BJ (cell line): ENCODE measurements at regions of chr1 and their contacts with region 1.

Region 1: GRCh38 chr1:76154206-76154956 is 79.8 kb downstream of the ST6GALNAC3 start:
- DNase-seq: peak; percentile 7
- H3K4me3 ChIP-seq: peak overlapping the region; percentile 36
- H3K27me3 ChIP-seq: peaks cover 2% of the 10 kb centered on the region; the same call in 1 of the 2 replicates
- CTCF ChIP-seq: peak; percentile 98

Region 2: GRCh38 chr1:75908717-75909152 is 245.6 kb before region 1 on chr1:
- CTCF ChIA-PET with region 1: interaction called, 11 read pairs
- POLR2A ChIA-PET with region 1: no interaction called
- DNase-seq: no peak
- H3K4me3 ChIP-seq: no peak overlapping the region
- H3K27me3 ChIP-seq: no peaks in the 10 kb centered on the region
- CTCF ChIP-seq: peak; percentile 60

Region 3: DNA sequence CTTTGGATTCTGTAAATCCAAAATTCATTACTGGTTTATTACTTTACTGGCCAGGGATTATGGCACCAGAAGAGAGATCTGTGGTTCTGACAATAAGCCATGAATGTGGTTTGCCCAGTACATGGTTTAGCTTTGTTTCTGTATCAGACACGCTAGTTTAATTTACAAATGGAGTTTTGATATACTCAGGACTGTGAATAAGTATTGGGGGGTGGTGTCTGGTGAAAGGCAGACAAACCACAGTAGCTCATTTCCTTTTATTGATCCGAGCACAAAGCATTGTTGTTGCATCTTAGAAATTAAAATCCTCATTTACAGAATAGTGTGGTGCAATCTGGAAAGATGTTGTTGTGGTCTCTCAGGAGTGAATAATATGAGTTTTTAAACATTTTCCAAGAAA is 16.1 kb after region 1 on chr1:
- CTCF ChIA-PET with region 1: interaction called, 14 read pairs
- POLR2A ChIA-PET with region 1: no interaction called
- DNase-seq: no peak
- H3K4me3 ChIP-seq: no peak overlapping the region
- H3K27me3 ChIP-seq: no peaks in the 10 kb centered on the region
- CTCF ChIP-seq: no peak

Region 4: GRCh38 chr1:76203132-76203531 is 48.8 kb after region 1 on chr1:
- CTCF ChIA-PET with region 1: no interaction called
- POLR2A ChIA-PET with region 1: no interaction called
- DNase-seq: no peak
- H3K4me3 ChIP-seq: no peak overlapping the region
- H3K27me3 ChIP-seq: no peaks in the 10 kb centered on the region
- CTCF ChIP-seq: no peak

Region 5: GRCh38 chr1:76354236-76354635 is 199.9 kb after region 1 on chr1:
- CTCF ChIA-PET with region 1: no interaction called
- POLR2A ChIA-PET with region 1: no interaction called
- DNase-seq: no peak
- H3K4me3 ChIP-seq: no peak overlapping the region
- H3K27me3 ChIP-seq: no peaks in the 10 kb centered on the region
- CTCF ChIP-seq: no peak

Region 6: DNA sequence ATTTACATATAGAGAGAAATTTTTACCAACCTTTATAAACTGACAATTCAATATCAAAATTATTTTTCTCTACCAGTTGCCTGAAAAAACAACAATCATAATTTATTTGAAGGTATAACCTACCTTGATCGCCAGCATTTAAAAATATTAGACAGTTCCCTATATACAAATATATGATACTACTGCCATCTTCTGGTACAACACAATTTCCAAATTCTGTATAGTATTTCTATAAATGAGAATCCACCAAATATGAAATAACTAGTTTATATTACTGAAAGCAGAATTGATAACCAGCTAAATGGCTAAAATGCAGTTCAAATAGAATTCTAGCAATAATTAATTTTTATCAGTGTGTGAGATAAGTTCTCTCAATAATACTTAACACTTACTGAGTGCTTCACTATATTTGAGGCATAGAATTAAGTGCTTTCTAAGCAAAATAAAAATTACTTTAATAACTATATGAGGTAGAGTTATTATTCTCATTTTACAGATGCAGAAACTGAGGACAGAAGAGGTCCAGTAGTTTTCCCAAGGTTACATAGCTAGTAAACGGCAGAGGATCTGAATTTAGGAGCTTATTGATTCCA is 989.2 kb after region 1 on chr1:
- CTCF ChIA-PET with region 1: interaction called, 25 read pairs
- POLR2A ChIA-PET with region 1: no interaction called
- DNase-seq: no peak
- H3K4me3 ChIP-seq: no peak overlapping the region
- H3K27me3 ChIP-seq: no peaks in the 10 kb centered on the region
- CTCF ChIP-seq: peak; percentile 27; the same call in 1 of the 2 replicates